ENCODE measurements at regions of chr12 and their contacts with region 1.

Region 1: GRCh38 chr12:12081836-12082497 is 11.2 kb downstream of the BCL2L14 start:
- DNase-seq: peak; percentile 18
- H3K4me3 Mint-ChIP-seq: no peak overlapping the region
- H3K27ac Mint-ChIP-seq: peak overlapping the region; percentile 30
- H3K4me1 Mint-ChIP-seq: no peaks in the 10 kb centered on the region
- H3K27me3 Mint-ChIP-seq: no peaks in the 10 kb centered on the region
- CTCF ChIP-seq: no peak

Region 2: GRCh38 chr12:12327802-12328201 is 245.8 kb after region 1 on chr12:
- CTCF ChIA-PET with region 1: interaction called, 11 read pairs
- intact Hi-C with region 1: loop called (anchors 2 kb)
- DNase-seq: peak; percentile 22
- H3K4me3 Mint-ChIP-seq: no peak overlapping the region
- H3K27ac Mint-ChIP-seq: peak overlapping the region; percentile 64
- H3K4me1 Mint-ChIP-seq: peaks cover 42% of the 10 kb centered on the region
- H3K27me3 Mint-ChIP-seq: no peaks in the 10 kb centered on the region
- CTCF ChIP-seq: no peak

Region 3: DNA sequence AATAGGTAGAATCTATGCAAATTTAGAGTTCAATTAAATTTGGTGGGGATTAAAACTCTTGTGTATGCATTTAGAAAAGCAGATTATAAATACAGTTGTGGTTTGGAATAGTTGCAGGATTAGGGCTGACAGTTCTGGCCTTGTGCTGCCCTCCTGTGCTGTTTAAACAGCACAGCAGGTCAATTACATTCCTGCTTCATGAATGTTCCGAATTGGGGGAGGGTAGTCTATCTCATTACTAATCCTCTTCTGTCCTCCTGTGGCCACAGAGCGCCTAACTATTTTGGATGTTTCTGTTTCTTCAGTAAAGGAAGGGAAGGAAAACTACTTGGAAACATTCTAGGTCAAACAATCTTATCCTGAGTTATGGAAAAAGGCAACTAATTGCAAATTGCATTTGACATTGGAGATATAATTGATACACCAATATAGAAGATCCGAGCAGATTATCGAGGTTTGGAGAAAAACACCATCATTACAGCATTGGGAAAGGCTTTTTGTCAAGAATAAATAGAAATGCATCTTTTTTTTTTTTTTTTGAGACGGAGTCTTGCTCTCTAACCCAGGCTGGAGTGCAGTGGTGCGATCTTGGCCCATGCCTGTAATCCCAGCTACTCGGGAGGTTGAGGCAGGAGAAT is 622.7 kb after region 1 on chr12:
- CTCF ChIA-PET with region 1: no interaction called
- intact Hi-C with region 1: loop called (anchors 5 kb)
- DNase-seq: peak; percentile 60
- H3K4me3 Mint-ChIP-seq: no peak overlapping the region
- H3K27ac Mint-ChIP-seq: no peak overlapping the region
- H3K4me1 Mint-ChIP-seq: peaks cover 17% of the 10 kb centered on the region
- H3K27me3 Mint-ChIP-seq: no peaks in the 10 kb centered on the region
- CTCF ChIP-seq: peak; percentile 71

Region 4: GRCh38 chr12:12786716-12787601 is 705.0 kb after region 1 on chr12:
- CTCF ChIA-PET with region 1: no interaction called
- intact Hi-C with region 1: no loop called
- DNase-seq: peak; percentile 81
- H3K4me3 Mint-ChIP-seq: peak overlapping the region; percentile 66
- H3K27ac Mint-ChIP-seq: peak overlapping the region; percentile 78
- H3K4me1 Mint-ChIP-seq: peaks cover 44% of the 10 kb centered on the region
- H3K27me3 Mint-ChIP-seq: no peaks in the 10 kb centered on the region
- CTCF ChIP-seq: no peak